ENCODE measurements at regions of chr3 and their contacts with region 1.

Region 1: DNA sequence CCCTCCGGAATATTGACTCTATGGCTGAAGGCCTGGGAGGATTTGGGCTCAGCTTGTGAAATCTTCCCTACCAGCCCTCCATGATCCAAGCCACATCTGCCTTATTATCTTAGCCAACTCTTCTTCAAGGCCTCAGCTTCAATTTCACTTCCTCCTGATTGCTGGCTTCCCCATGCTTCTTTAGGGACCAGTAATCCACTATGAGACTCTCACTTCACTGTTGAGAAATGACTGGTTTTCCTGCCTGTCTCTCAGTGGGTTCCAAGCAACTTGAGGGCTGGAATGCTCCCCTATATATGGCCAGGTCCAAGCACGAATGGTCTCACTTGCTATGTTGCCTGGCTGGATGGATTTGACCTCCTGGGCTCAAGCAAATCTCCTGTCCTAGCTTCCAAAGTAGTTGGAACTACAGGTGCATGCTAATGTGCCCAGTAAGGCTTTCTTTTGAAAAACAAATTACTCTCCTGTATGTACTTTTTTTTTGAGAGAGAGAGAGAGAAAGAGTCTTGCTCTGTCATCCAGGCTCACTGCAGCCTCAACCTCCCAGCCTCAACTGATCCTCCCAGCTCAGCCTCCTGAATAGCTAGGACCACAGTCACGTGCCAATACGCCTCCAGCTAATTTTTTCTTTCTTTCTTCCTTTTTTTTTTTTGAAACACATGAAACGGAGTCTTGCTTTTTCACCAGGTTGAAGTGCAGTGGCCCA is 7.9 kb upstream of the PIK3CB start:
- DNase-seq: no peak
- ATAC-seq: peak in 1 of 2 donors; percentile 26
- H3K4me3 ChIP-seq: no peak overlapping the region
- H3K27ac ChIP-seq: no peak overlapping the region
- H3K4me1 ChIP-seq: no peaks in the 10 kb centered on the region
- H3K27me3 ChIP-seq: no peaks in the 10 kb centered on the region

Region 2: GRCh38 chr3:138909904-138910303 is 67.3 kb after region 1 on chr3:
- intact Hi-C with region 1: loop called in 2 of 4 experiments (anchors 10 kb)
- DNase-seq: no peak
- ATAC-seq: no peak
- H3K4me3 ChIP-seq: no peak overlapping the region
- H3K27ac ChIP-seq: no peak overlapping the region
- H3K4me1 ChIP-seq: no peaks in the 10 kb centered on the region
- H3K27me3 ChIP-seq: no peaks in the 10 kb centered on the region

Measured in right cardiac atrium (tissue), 5 donors.